MCF 10A (cell line): ENCODE measurements at regions of chr9 and their contacts with region 1.

Region 1: GRCh38 chr9:6008169-6008979 is 7.0 kb downstream of the RANBP6 start:
- DNase-seq: peak; percentile 98
- H3K4me3 Mint-ChIP-seq: peak overlapping the region; percentile 95
- H3K27ac Mint-ChIP-seq: peak overlapping the region; percentile 70
- H3K4me1 Mint-ChIP-seq: peaks cover 40% of the 10 kb centered on the region
- H3K27me3 Mint-ChIP-seq: no peaks in the 10 kb centered on the region
- CTCF ChIP-seq: no peak

Region 2: DNA sequence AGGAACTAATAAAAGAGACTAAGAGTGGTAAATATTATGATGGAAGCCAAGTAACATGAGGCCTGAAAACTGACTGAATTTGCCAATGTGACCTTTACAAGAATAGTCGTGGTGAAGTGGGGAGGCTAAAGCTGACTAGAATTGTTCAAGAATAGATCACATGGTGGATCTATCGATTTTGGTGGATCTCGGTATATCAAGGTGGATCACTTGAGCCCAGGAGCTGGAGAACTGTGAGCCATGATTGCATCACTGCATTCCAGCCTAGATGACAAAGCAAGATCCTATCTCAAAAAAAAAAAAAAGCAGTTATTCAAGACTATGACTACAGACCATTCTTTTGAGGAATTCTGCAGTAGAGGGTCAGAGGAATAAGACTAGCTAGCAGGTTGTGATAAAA is 190.5 kb before region 1 on chr9:
- CTCF ChIA-PET with region 1: no interaction called
- POLR2A ChIA-PET with region 1: interaction called, 10 read pairs
- intact Hi-C with region 1: no loop called
- DNase-seq: peak; percentile 67
- H3K4me3 Mint-ChIP-seq: no peak overlapping the region
- H3K27ac Mint-ChIP-seq: peak overlapping the region; percentile 7
- H3K4me1 Mint-ChIP-seq: peaks cover 16% of the 10 kb centered on the region
- H3K27me3 Mint-ChIP-seq: no peaks in the 10 kb centered on the region
- CTCF ChIP-seq: no peak

Region 3: GRCh38 chr9:5879419-5880181 is 128.8 kb before region 1 on chr9:
- CTCF ChIA-PET with region 1: interaction called, 3 read pairs
- POLR2A ChIA-PET with region 1: interaction called, 14 read pairs
- intact Hi-C with region 1: no loop called
- DNase-seq: peak; percentile 85
- H3K4me3 Mint-ChIP-seq: peak overlapping the region; percentile 58
- H3K27ac Mint-ChIP-seq: peak overlapping the region; percentile 80
- H3K4me1 Mint-ChIP-seq: peaks cover 9% of the 10 kb centered on the region
- H3K27me3 Mint-ChIP-seq: no peaks in the 10 kb centered on the region
- CTCF ChIP-seq: no peak

Region 4: GRCh38 chr9:5994493-5994892 is 13.9 kb before region 1 on chr9:
- CTCF ChIA-PET with region 1: no interaction called
- POLR2A ChIA-PET with region 1: interaction called, 11 read pairs
- intact Hi-C with region 1: no loop called
- DNase-seq: no peak
- H3K4me3 Mint-ChIP-seq: no peak overlapping the region
- H3K27ac Mint-ChIP-seq: no peak overlapping the region
- H3K4me1 Mint-ChIP-seq: peaks cover 14% of the 10 kb centered on the region
- H3K27me3 Mint-ChIP-seq: no peaks in the 10 kb centered on the region
- CTCF ChIP-seq: no peak

Region 5: DNA sequence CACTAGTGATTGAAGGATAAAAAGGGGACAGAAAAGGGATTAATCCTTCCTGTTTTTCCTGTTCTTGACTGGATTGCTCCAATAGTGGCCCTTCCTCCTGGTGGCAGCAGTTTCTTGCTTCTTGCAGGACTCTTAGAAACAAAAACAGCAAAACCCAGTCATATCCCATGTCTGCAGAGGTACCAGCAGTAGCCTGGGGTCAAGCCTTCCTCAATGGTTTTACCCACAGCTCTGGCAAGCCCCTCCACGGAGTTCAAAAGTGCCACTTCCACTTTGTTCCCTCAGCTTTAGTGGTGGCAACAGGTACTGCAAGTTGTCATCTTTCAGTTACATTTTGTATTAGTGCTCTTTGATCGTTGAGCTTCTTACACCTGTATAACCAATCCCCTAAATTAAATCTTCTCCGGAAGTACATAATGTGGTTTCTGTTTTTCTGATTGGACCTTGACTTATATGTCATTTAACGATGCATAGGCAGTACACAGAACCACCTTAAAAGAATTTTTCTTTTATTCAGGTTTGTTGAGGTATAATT is 15.7 kb after region 1 on chr9:
- CTCF ChIA-PET with region 1: interaction called, 4 read pairs
- POLR2A ChIA-PET with region 1: interaction called, 38 read pairs
- intact Hi-C with region 1: no loop called
- DNase-seq: peak; percentile 26
- H3K4me3 Mint-ChIP-seq: no peak overlapping the region
- H3K27ac Mint-ChIP-seq: no peak overlapping the region
- H3K4me1 Mint-ChIP-seq: peaks cover 14% of the 10 kb centered on the region
- H3K27me3 Mint-ChIP-seq: no peaks in the 10 kb centered on the region
- CTCF ChIP-seq: peak; percentile 41

Region 6: DNA sequence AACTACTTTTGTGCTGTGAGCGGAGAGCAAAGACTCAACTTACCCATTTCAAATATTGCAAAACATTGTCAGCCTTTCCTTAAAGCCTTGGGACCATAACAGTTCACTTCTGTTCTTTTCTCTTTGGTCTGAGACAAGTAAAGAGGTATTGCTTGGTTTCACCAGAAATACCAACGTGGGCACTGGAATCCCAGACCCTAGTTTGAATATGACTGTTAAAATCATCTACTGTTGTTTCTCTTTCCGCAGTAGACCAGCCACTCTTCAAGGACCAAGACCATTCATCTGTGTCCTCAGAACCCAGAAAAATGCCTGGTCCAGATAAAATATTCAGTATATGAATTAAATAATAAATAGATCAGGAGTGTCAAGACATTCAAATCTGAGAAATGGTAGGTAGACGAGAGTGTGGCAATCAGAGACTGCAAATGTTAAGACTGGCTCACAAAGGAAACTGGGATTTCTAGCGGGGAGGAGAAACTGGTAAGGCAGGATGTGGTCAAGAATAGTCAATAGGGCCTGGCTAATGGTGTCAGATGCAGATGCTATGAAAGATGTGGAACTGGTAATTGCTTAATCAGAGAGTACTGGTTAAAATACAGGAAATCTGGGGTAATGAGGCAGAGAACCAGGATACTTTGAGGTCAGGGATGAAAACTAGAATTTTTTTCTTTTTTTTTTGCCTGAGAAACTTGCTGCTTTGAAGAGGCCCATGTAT is 125.1 kb after region 1 on chr9:
- CTCF ChIA-PET with region 1: no interaction called
- POLR2A ChIA-PET with region 1: no interaction called
- intact Hi-C with region 1: no loop called
- DNase-seq: no peak
- H3K4me3 Mint-ChIP-seq: no peak overlapping the region
- H3K27ac Mint-ChIP-seq: no peak overlapping the region
- H3K4me1 Mint-ChIP-seq: no peaks in the 10 kb centered on the region
- H3K27me3 Mint-ChIP-seq: no peaks in the 10 kb centered on the region
- CTCF ChIP-seq: no peak

Region 7: GRCh38 chr9:6764523-6764922 is 756.1 kb after region 1 on chr9:
- CTCF ChIA-PET with region 1: no interaction called
- POLR2A ChIA-PET with region 1: no interaction called
- intact Hi-C with region 1: no loop called
- DNase-seq: peak; percentile 11
- H3K4me3 Mint-ChIP-seq: no peak overlapping the region
- H3K27ac Mint-ChIP-seq: peak overlapping the region; percentile 5
- H3K4me1 Mint-ChIP-seq: peaks cover 17% of the 10 kb centered on the region
- H3K27me3 Mint-ChIP-seq: no peaks in the 10 kb centered on the region
- CTCF ChIP-seq: no peak